ENCODE measurements at regions of chr1 and their contacts with region 1.

Region 1: GRCh38 chr1:167268398-167268787 is 47.7 kb downstream of the POU2F1 start:
- DNase-seq: no peak
- H3K4me3 Mint-ChIP-seq: no peak overlapping the region
- H3K27ac Mint-ChIP-seq: no peak overlapping the region
- H3K4me1 Mint-ChIP-seq: peaks cover 20% of the 10 kb centered on the region
- H3K27me3 Mint-ChIP-seq: no peaks in the 10 kb centered on the region

Region 2: DNA sequence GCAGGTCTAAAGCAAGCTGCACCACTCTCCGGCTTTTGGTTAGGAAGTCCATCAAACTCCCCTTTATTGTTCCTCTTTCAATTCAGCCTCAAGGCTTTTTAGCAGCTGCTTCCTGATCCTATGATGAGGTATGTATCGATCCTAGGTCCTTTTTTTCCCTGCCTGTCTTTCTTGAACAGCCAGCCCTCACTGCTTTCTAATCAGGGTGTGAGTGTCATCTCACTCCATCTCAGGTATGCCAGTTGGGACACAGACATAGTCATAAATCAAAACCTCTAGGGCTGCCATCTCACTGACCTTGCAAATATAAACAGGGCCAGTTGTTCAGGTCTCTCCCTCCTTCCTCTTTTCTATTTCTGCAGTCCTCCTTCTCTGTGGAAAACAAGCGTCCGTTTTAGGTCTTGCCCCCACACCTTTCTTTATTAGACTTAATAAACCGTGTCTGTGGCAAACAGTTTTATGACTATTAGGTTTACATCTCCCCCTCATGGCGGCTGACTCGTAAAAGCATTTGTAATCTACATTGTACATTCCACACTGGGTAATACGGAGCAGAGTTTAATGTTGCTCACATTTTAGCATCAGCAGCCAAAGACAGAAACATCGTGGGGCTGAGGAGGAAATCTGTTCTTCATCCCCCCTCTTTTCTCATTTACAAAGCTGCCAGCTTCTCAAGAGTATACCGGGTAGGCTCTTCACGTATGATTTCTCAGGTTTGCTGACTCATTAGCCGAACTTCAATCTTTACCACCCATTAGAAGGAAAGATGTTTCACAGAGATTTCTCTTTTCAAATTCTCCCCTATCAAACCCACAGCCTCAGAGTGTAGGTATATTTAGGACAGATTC is 162.9 kb before region 1 on chr1:
- intact Hi-C with region 1: no loop called
- DNase-seq: no peak
- H3K4me3 Mint-ChIP-seq: peak overlapping the region; percentile 4
- H3K27ac Mint-ChIP-seq: no peak overlapping the region
- H3K4me1 Mint-ChIP-seq: peaks cover 66% of the 10 kb centered on the region
- H3K27me3 Mint-ChIP-seq: no peaks in the 10 kb centered on the region

Region 3: DNA sequence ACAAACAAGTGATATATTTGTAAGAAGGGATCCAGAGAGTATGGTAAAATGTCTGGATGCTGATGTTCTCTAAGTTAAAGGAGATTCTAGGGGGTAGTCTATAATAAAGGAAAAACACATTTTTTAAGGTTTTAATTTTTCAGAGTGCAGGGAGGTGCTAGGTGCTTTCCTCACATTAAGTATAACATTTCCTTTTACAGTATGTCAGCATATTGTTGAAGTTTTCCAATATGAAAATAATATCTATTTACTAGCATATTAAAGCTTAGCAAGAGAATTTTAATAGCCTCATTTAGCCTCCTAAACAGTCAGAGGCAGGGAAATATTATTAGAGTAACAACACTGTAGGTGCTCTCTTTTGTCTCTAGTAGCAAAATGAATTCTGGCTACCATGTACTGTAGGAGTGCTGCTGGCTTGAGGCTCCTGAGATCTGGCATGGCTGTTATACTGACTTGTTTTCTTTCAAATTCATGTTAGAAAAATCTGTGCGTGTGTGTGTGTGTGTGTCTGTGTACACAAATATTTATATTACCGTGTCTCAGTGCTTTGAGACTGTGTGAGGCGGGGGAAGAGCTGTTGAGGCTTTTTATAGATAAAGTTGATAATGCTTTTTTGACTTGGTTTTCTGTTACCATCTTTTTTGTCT is 23.3 kb after region 1 on chr1:
- intact Hi-C with region 1: no loop called
- DNase-seq: no peak
- H3K4me3 Mint-ChIP-seq: no peak overlapping the region
- H3K27ac Mint-ChIP-seq: no peak overlapping the region
- H3K4me1 Mint-ChIP-seq: peaks cover 11% of the 10 kb centered on the region
- H3K27me3 Mint-ChIP-seq: no peaks in the 10 kb centered on the region

Region 4: GRCh38 chr1:167342846-167343245 is 74.5 kb after region 1 on chr1:
- intact Hi-C with region 1: loop called (anchors 5 kb)
- DNase-seq: no peak
- H3K4me3 Mint-ChIP-seq: no peak overlapping the region
- H3K27ac Mint-ChIP-seq: no peak overlapping the region
- H3K4me1 Mint-ChIP-seq: peaks cover 5% of the 10 kb centered on the region
- H3K27me3 Mint-ChIP-seq: no peaks in the 10 kb centered on the region

Region 5: DNA sequence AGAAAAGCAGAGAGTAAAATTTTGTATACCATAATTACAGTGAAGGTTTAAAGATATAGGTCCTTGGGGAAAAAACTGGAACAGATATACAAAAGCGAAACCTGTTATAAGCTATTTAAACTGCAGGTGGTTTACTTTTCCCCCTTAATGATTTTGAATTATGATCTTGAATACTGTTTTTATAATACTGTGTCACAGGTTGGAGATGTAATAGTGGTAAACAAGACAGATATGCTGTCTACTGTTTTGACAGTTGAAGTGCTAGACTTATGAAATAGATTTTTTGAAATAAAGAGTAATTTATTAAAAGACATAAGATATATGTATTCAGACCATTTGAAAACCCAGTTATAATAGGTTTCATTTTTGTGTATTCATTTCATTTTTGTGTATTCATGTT is 120.6 kb after region 1 on chr1:
- intact Hi-C with region 1: no loop called
- DNase-seq: no peak
- H3K4me3 Mint-ChIP-seq: no peak overlapping the region
- H3K27ac Mint-ChIP-seq: no peak overlapping the region
- H3K4me1 Mint-ChIP-seq: peaks cover 13% of the 10 kb centered on the region
- H3K27me3 Mint-ChIP-seq: no peaks in the 10 kb centered on the region

Region 6: GRCh38 chr1:167409183-167409582 is 140.8 kb after region 1 on chr1:
- intact Hi-C with region 1: loop called (anchors 5 kb)
- DNase-seq: no peak
- H3K4me3 Mint-ChIP-seq: no peak overlapping the region
- H3K27ac Mint-ChIP-seq: no peak overlapping the region
- H3K4me1 Mint-ChIP-seq: peaks cover 16% of the 10 kb centered on the region
- H3K27me3 Mint-ChIP-seq: no peaks in the 10 kb centered on the region

Region 7: GRCh38 chr1:167489571-167490340 is 221.4 kb after region 1 on chr1:
- intact Hi-C with region 1: no loop called
- DNase-seq: no peak
- H3K4me3 Mint-ChIP-seq: peak overlapping the region; percentile 51
- H3K27ac Mint-ChIP-seq: peak overlapping the region; percentile 86
- H3K4me1 Mint-ChIP-seq: peaks cover 92% of the 10 kb centered on the region
- H3K27me3 Mint-ChIP-seq: no peaks in the 10 kb centered on the region

Region 8: DNA sequence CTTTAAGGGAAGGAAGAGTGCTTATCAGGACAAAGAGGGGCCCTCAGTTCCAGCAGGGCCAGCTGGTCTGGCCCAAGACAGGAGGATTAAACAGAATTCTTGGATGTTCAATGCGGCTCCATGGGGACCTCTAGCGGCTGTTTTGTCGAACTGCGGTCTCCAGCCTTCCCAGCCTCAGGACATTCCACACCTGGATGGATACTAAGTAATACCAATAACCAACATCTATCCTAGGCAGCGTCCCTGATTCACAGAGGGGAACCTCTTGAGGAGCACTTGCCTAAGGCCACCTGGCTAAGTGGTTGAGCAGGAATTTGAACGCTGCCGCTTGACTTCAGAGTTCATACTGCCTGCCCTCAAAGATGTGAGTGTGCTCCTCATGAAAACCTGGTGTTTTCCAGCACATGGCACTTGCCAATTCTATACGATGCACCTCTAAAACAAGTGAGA is 265.5 kb after region 1 on chr1:
- intact Hi-C with region 1: loop called (anchors 1 kb)
- DNase-seq: peak; percentile 51
- H3K4me3 Mint-ChIP-seq: no peak overlapping the region
- H3K27ac Mint-ChIP-seq: no peak overlapping the region
- H3K4me1 Mint-ChIP-seq: peaks cover 5% of the 10 kb centered on the region
- H3K27me3 Mint-ChIP-seq: peaks cover 7% of the 10 kb centered on the region